ENCODE measurements at regions of chr13 and their contacts with region 1.

Region 1: GRCh38 chr13:19589312-19589711 is 28.0 kb upstream of the TPTE2 start:
- DNase-seq: no peak
- H3K4me3 ChIP-seq: no peak overlapping the region
- H3K27ac ChIP-seq: no peak overlapping the region
- H3K27me3 ChIP-seq: peaks cover 2% of the 10 kb centered on the region
- CTCF ChIP-seq: no peak

Region 2: GRCh38 chr13:19618925-19619324 is 29.6 kb after region 1 on chr13:
- CTCF ChIA-PET with region 1: interaction called, 10 read pairs
- POLR2A ChIA-PET with region 1: no interaction called
- DNase-seq: no peak
- H3K4me3 ChIP-seq: no peak overlapping the region
- H3K27ac ChIP-seq: no peak overlapping the region
- H3K27me3 ChIP-seq: no peaks in the 10 kb centered on the region
- CTCF ChIP-seq: peak; percentile 76

Measured in AG04450 (cell line).